Activated T-helper 1 cell treated with anti-CD3 and anti-CD28 coated beads, Interleukin-12 subunit alpha, Interleukin-12 subunit beta, Interleukin-2, Interleukin-4 antibody, amounts not matched to agents 30 ng/mL and 10 ng/mL and 1 ng/mL, durations not matched to agents 14 hours and 24 hours and 36 hours (primary cell): ENCODE measurements at regions of chr19 and their contacts with region 1.

Region 1: GRCh38 chr19:13117772-13118423 is at the start of gene NACC1:
- DNase-seq: peak; percentile 89
- H3K4me3 Mint-ChIP-seq: peak within 1 kb of the TSS; percentile 96
- H3K27ac Mint-ChIP-seq: peak within 1 kb of the TSS; percentile 97
- H3K4me1 Mint-ChIP-seq: peaks cover 51% of the 10 kb centered on the region
- H3K27me3 Mint-ChIP-seq: no peaks in the 10 kb centered on the region
- total RNA-seq, gene NACC1: 124 TPM in 2 replicates

Region 2: GRCh38 chr19:13099073-13099999 is 18.6 kb before region 1 on chr19:
- intact Hi-C with region 1: loop called (anchors 1 kb)
- DNase-seq: peak; percentile 76
- H3K4me3 Mint-ChIP-seq: peak overlapping the region; percentile 76
- H3K27ac Mint-ChIP-seq: peak overlapping the region; percentile 95
- H3K4me1 Mint-ChIP-seq: peaks cover 21% of the 10 kb centered on the region
- H3K27me3 Mint-ChIP-seq: peaks cover 19% of the 10 kb centered on the region

Region 3: DNA sequence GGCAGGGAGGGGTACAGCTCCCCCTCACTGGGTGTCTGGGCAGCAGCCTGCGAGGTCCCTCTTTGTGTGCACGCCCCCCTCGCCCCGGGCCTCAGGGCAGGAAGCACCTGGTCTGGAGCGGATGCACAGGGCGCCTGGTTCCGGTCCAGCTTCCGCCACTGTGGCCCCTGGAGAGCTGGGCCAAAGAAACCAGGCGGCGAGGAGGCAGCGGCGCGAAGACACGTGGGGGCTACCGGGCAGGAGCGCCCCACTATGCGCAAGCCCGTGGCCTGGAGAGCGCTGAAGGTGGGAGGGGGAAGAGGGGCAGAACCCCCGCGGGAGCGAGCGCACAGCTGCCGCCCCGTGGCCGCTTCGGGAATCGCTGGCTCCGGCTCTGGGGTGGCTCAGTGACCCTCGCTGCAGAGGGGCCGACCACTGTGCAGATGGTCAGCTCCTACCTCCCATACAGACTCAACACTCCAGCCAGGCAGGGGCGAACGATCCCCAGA is 13.5 kb before region 1 on chr19:
- intact Hi-C with region 1: loop called (anchors 1 kb)
- DNase-seq: peak; percentile 62
- H3K4me3 Mint-ChIP-seq: peak overlapping the region; percentile 93
- H3K27ac Mint-ChIP-seq: peak overlapping the region; percentile 91
- H3K4me1 Mint-ChIP-seq: peaks cover 17% of the 10 kb centered on the region
- H3K27me3 Mint-ChIP-seq: no peaks in the 10 kb centered on the region

Region 4: GRCh38 chr19:13132471-13133180 is 14.7 kb after region 1 on chr19:
- intact Hi-C with region 1: loop called (anchors 1 kb)
- DNase-seq: peak; percentile 46
- H3K4me3 Mint-ChIP-seq: peak overlapping the region; percentile 77
- H3K27ac Mint-ChIP-seq: peak overlapping the region; percentile 90
- H3K4me1 Mint-ChIP-seq: peaks cover 41% of the 10 kb centered on the region
- H3K27me3 Mint-ChIP-seq: no peaks in the 10 kb centered on the region

Region 5: DNA sequence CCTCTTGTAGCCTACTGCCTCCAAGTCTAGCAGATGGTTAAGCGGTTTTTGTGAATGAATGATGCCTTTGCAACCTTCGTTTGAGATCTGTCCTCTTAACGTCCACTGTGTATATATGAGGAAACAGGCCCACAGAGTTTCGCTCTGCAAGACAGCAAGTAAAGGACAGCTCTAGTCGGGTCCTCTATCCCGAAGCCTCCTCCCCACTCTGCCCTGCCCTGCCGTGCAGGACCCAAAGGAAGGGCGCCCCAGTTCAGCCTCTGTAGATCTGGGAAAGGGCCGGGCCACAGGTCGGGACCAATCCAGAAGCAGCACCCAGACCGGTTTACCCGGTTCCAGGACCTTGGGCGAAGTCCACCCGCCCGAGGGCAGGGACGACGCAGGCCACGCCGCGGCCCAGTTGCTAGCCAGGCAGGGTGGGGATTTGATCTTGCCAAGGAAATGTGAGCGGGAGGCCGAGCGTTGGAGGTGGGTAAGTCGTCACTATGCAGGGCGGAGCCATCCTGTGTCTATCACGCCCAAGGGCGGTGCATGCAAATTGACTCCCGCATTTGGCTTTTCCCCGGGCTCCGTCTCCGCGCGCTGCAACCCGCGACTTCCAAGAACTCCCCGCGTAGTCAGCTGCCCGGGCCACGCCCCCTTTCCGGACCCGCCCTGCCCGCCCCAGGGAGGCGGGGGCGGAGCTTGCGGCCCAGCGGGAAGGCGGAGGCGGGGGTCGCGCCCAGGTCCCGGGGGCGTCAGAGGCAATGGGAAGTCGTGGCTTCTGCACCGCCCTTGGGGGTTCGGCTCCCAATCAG is 44.8 kb after region 1 on chr19:
- intact Hi-C with region 1: loop called (anchors 2 kb)
- DNase-seq: peak; percentile 90
- H3K4me3 Mint-ChIP-seq: peak overlapping the region; percentile 82
- H3K27ac Mint-ChIP-seq: peak overlapping the region; percentile 94
- H3K4me1 Mint-ChIP-seq: peaks cover 51% of the 10 kb centered on the region
- H3K27me3 Mint-ChIP-seq: no peaks in the 10 kb centered on the region

Region 6: GRCh38 chr19:13212759-13213330 is 94.9 kb after region 1 on chr19:
- intact Hi-C with region 1: loop called (anchors 1 kb)
- DNase-seq: peak; percentile 59
- H3K4me3 Mint-ChIP-seq: no peak overlapping the region
- H3K27ac Mint-ChIP-seq: peak overlapping the region; percentile 41
- H3K4me1 Mint-ChIP-seq: peaks cover 24% of the 10 kb centered on the region
- H3K27me3 Mint-ChIP-seq: peaks cover 4% of the 10 kb centered on the region

Region 7: GRCh38 chr19:13262450-13262849 is 144.6 kb after region 1 on chr19:
- intact Hi-C with region 1: loop called (anchors 5 kb)
- DNase-seq: peak; percentile 8
- H3K4me3 Mint-ChIP-seq: no peak overlapping the region
- H3K27ac Mint-ChIP-seq: no peak overlapping the region
- H3K4me1 Mint-ChIP-seq: peaks cover 17% of the 10 kb centered on the region
- H3K27me3 Mint-ChIP-seq: peaks cover 17% of the 10 kb centered on the region